GM18951 (cell line): ENCODE measurements at regions of chr3 and their contacts with region 1.

Region 1: DNA sequence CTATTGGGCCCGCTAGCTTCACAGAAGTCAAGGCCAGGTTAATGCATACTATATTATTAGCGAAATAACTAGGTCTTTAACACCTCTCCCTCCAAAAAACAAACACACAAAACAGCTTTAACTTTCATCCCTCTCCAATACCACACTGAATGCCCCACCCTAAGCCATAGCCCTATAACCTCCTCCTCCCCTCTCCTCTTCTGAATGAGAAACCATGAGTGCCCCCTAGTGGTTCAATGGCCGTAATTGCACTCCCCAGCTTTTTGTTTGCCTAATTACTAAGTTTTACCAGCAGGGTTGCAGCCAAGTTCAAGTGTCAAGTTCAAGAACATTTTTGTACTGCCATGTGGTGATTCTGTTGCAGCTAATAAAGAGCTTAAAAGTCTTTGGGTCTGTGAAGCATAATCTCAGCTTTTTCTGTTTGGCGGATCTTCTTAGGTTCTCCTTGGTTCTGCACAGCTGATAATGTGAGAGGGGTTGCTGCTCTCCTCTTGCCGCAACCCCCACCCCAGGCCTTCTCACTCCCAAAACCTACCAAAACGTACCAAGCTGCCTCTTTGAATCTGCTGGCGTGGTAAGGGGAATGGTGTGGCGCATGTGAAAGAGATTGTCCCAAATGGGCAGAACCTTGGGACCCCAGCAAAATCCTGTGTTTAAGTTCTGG is 57.9 kb downstream of the RPL22L1 start:
- POLR2A ChIP-seq: no peak

Region 2: GRCh38 chr3:170055209-170055608 is 756.9 kb before region 1 on chr3:
- in situ Hi-C with region 1: loop called (anchors 25 kb)
- POLR2A ChIP-seq: no peak

Region 3: GRCh38 chr3:170307671-170308403 is 504.2 kb before region 1 on chr3:
- in situ Hi-C with region 1: loop called (anchors 5 kb)
- POLR2A ChIP-seq: no peak

Region 4: GRCh38 chr3:170414202-170414663 is 397.8 kb before region 1 on chr3:
- in situ Hi-C with region 1: loop called (anchors 10 kb)
- POLR2A ChIP-seq: no peak

Region 5: GRCh38 chr3:171088964-171089754 is 277.1 kb after region 1 on chr3:
- in situ Hi-C with region 1: no loop called
- POLR2A ChIP-seq: no peak